Gastrocnemius medialis (tissue), 4 donors: ENCODE measurements at regions of chr6 and their contacts with region 1.

Region 1: GRCh38 chr6:24855395-24856245 is 56.9 kb upstream of the ARMH2 start:
- DNase-seq: peak; percentile 31 to 45
- ATAC-seq: peak; percentile 54 to 78
- H3K4me3 ChIP-seq: peak overlapping the region in 2 of 4 donors; percentile 5 to 12
- H3K27ac ChIP-seq: peak overlapping the region; percentile 22 to 36 (median 28)
- H3K4me1 ChIP-seq: no peaks in the 10 kb centered on the region
- H3K27me3 ChIP-seq: no peaks in the 10 kb centered on the region
- CTCF ChIP-seq: peak; percentile 81 to 89 (median 83)
- POLR2A ChIP-seq: no peak

Region 2: DNA sequence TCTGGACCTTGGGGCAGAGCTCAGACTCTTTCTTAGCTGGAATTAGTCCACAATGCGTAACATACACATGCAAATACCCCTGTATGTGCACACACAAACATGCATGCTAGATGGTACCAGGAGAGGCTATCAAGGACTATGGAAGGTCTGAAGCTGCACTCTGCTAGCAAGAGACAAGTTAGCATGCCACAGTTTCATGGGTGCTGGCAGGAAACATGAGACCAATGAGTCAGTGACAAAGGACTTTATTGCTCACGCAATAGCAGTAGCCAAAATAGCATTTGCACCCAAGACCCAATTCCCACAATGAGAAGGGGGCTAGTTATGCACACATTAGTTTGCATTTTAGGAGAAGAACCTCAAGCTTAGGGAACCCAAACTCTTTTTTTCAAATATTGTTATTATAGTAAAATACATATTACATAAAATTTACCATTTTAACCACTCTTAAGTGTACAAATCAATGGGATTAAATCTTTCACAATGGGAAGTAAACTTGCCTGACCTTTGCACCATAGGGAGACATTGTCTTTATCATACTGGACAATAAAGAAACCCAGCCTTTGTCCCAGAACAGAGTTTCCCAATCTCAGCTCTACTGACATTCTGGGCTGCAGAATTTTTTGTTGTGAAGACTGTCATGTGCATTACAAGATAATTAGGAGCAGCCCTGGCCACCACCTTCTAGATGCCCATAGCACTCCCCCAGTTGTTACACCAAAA is 660.5 kb before region 1 on chr6:
- in situ Hi-C with region 1: no loop called
- intact Hi-C with region 1: no loop called
- DNase-seq: no peak
- ATAC-seq: no peak
- H3K4me3 ChIP-seq: no peak overlapping the region
- H3K27ac ChIP-seq: no peak overlapping the region
- H3K4me1 ChIP-seq: no peaks in the 10 kb centered on the region
- H3K27me3 ChIP-seq: no peaks in the 10 kb centered on the region
- CTCF ChIP-seq: no peak
- POLR2A ChIP-seq: no peak

Region 3: DNA sequence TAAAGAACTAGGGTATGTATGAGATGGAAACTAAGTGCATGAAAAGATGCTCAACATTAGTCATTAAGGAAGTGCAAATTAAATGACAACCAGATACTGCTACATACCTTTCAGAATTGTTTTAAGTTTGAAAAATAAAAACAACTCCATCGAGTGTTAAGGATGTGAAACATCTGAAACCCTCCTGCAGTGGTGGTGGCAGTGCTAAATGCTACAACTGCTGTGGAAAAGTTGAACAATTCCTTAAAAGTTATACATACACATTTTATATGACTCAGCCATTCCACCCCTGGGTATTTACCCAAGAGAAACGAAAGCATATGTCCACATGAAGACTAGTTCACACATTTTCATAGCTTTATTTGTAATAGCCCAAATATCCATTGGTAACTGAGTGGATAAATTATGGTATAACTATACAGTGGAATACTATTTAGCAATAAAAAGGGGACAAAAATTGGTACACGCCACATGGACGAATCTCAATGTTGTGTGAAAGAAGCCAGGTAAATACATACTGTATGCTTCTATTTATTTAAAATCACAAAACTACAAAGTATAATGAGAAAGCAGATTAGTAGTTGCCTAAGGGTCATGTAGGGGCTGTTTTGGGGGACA is 67.5 kb before region 1 on chr6:
- in situ Hi-C with region 1: no loop called
- intact Hi-C with region 1: no loop called
- DNase-seq: no peak
- ATAC-seq: no peak
- H3K4me3 ChIP-seq: no peak overlapping the region
- H3K27ac ChIP-seq: no peak overlapping the region
- H3K4me1 ChIP-seq: no peaks in the 10 kb centered on the region
- H3K27me3 ChIP-seq: no peaks in the 10 kb centered on the region
- CTCF ChIP-seq: no peak
- POLR2A ChIP-seq: no peak

Region 4: DNA sequence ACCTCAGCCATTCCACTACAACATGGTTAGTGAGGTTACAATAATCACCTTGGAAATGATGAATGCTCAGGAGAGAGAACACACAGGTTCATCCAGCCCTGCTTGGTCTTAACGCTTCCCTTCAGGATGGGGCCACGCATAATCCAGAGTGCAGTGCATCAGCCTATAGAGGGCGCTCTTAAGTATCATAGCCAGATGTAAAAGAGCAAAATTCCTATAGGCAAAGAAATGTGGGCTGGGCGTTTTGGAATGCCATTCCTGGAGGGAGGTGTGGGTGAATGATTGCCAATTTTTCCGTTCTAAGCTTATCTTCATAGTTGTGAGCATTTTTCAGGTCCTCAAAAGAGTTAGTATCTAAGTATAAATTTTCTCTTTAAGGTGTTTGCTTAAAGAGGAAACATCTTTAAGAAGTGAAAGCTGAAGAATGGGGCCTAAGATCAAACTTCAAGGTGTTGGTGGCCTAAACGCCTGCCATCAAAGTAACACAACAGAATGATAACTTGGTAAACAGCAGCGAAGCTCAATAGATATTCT is 78.3 kb after region 1 on chr6:
- in situ Hi-C with region 1: no loop called
- intact Hi-C with region 1: loop called (anchors 5 kb)
- DNase-seq: no peak
- ATAC-seq: no peak
- H3K4me3 ChIP-seq: no peak overlapping the region
- H3K27ac ChIP-seq: no peak overlapping the region
- H3K4me1 ChIP-seq: peaks cover 23 to 28% of the 10 kb centered on the region in 2 donors
- H3K27me3 ChIP-seq: no peaks in the 10 kb centered on the region
- CTCF ChIP-seq: peak in 2 of 5 experiments; percentile 24 to 49
- POLR2A ChIP-seq: no peak

Region 5: DNA sequence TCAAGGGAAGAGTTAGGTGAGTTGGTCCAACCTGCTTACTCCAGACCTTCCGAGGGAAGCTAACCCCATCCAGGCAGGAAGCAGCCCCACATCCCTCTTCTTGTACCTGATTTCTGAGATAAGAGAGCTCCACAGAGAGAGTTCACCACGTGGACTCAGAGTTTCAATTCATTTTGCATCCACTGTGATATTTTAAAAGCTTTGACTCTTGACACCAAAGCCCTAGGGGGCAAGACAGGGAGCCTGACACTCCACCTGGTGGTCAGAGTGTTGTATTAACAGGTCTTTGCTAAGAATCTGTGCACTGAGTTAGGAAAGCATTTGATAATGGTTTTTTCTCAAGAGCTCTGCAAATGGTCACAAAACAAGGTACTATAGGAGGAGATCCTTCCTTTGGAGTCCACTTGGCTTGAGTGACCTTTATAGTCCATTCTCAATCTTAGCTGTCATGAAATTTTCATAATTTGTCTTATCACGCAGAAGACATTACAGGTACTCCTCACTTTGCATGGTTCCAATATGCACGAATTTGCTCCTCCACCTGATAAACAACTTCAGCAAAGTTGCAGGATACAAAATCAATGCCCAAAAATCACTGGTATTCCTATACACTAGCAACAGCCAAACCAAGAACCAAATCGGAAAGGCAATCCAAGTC is 136.3 kb after region 1 on chr6:
- in situ Hi-C with region 1: loop called in 3 of 4 experiments (anchors 5 to 10 kb)
- intact Hi-C with region 1: loop called (anchors 1 kb)
- DNase-seq: peak in 1 of 2 donors; percentile 33
- ATAC-seq: peak; percentile 76 to 96
- H3K4me3 ChIP-seq: no peak overlapping the region
- H3K27ac ChIP-seq: no peak overlapping the region
- H3K4me1 ChIP-seq: no peaks in the 10 kb centered on the region
- H3K27me3 ChIP-seq: no peaks in the 10 kb centered on the region
- CTCF ChIP-seq: peak; percentile 69 to 81 (median 76)
- POLR2A ChIP-seq: no peak

Region 6: DNA sequence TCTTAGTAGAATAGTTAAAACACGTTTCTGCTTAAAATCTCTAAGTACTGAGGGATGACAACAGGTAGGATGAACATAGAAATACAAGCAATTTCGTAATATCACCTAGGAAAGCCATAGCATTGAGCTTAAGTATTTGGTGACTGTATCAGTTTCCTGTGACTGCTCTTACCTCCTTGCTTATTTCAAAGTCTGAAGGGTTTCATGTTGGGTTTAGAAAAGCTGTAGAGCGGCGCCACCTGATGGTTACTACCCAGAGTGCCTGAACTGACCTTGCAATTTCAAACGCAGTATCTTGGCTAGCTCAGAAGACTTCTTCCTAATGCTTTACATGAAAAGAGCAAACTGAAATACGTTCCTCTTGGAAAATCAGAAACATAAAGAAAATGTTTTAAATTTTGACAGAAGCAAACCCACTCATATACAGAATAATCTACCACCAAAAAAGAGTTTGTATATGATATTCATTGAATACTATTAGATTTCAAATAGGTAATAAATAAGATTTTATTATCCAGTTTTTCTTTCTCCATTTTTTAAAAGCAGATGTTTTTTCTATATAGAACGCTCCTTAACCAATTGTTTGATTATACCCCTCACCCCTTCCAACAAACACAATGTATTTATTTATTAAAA is 162.4 kb after region 1 on chr6:
- in situ Hi-C with region 1: loop called in 2 of 4 experiments (anchors 10 kb)
- intact Hi-C with region 1: loop called (anchors 1 kb)
- DNase-seq: peak; percentile 32 to 67
- ATAC-seq: peak in 1 of 2 donors; percentile 95
- H3K4me3 ChIP-seq: no peak overlapping the region
- H3K27ac ChIP-seq: no peak overlapping the region
- H3K4me1 ChIP-seq: no peaks in the 10 kb centered on the region
- H3K27me3 ChIP-seq: no peaks in the 10 kb centered on the region
- CTCF ChIP-seq: peak; percentile 49 to 71 (median 63)
- POLR2A ChIP-seq: no peak

Region 7: DNA sequence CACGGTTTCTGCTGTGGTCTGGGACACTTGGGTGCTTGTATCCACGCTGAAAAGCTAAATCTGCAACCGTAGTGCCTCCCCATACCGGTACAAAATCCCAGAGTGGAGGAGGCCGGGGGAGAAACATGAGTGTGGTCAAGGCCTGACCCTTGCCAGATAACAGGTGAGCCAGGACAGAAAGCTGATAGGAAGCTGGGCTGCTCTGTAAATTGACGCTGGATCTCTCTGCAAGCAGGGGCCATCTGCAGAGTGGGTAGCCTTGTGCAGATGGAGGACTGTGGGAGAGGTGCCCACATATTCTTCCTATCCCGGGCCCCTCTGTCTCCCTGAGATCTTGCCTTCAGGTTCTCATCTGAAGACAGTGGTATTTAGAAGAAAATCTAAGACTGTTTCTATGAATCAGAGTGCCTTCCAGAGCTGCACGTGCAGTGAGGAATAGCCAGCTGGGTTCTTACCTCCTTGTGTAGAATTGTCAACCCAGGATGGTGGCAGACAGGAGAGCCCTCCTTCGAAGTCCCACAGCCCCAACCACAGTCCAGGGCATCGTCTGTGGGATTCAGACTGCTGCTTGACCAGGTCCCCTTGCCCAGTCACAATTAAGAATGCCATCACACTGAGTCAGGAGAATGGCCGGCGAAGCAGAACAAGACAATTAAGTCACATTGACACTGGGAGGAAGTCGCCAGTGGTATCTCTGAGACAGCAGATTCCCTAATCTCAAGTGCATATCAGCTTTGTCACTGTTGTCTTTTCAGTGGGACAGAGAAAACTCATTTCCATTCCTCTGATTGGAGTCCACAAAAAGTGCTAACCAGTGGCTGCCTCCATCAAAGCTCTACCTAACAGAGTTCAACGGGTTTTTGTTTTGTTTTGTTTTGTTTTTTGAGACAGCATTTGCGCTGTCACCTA is 180.2 kb after region 1 on chr6:
- in situ Hi-C with region 1: no loop called
- intact Hi-C with region 1: no loop called
- DNase-seq: no peak
- ATAC-seq: no peak
- H3K4me3 ChIP-seq: no peak overlapping the region
- H3K27ac ChIP-seq: no peak overlapping the region
- H3K4me1 ChIP-seq: no peaks in the 10 kb centered on the region
- H3K27me3 ChIP-seq: no peaks in the 10 kb centered on the region
- CTCF ChIP-seq: no peak
- POLR2A ChIP-seq: no peak

Region 8: GRCh38 chr6:25070547-25071366 is 215.1 kb after region 1 on chr6:
- in situ Hi-C with region 1: loop called (anchors 5 to 10 kb)
- intact Hi-C with region 1: loop called (anchors 1 kb)
- DNase-seq: peak; percentile 42 to 54
- ATAC-seq: peak; percentile 80 to 86
- H3K4me3 ChIP-seq: peak overlapping the region in 1 of 4 donors; percentile 25
- H3K27ac ChIP-seq: no peak overlapping the region
- H3K4me1 ChIP-seq: no peaks in the 10 kb centered on the region
- H3K27me3 ChIP-seq: no peaks in the 10 kb centered on the region
- CTCF ChIP-seq: peak; percentile 62 to 92 (median 77)
- POLR2A ChIP-seq: no peak